Naive thymus-derived CD4-positive, alpha-beta T cell (primary cell): ENCODE measurements at regions of chr1 and their contacts with region 1.

Region 1: GRCh38 chr1:100037927-100038659 is 68.3 kb downstream of the SLC35A3 start:
- DNase-seq: peak; percentile 83 to 92 (median 88)
- ATAC-seq: peak; percentile 91
- H3K4me3 ChIP-seq: peak overlapping the region; percentile 70
- H3K4me3 Mint-ChIP-seq: peak overlapping the region; percentile 93 to 99 (median 97)
- H3K27ac ChIP-seq: peak overlapping the region; percentile 99
- H3K27ac Mint-ChIP-seq: peak overlapping the region; percentile 97 to 100 (median 99)
- H3K4me1 ChIP-seq: peaks cover 22 to 31% of the 10 kb centered on the region in 2 donors
- H3K4me1 Mint-ChIP-seq: peaks cover 29 to 68% (median 58%) of the 10 kb centered on the region in 7 donors
- H3K27me3 ChIP-seq: no peaks in the 10 kb centered on the region
- H3K27me3 Mint-ChIP-seq: no peaks in the 10 kb centered on the region

Region 2: GRCh38 chr1:99808391-99809115 is 229.5 kb before region 1 on chr1:
- CTCF ChIA-PET with region 1: interaction called, 4 read pairs
- POLR2A ChIA-PET with region 1: no interaction called
- intact Hi-C with region 1: loop called (anchors 1 kb)
- DNase-seq: peak in 7 of 9 donors; percentile 32 to 63 (median 55)
- ATAC-seq: peak; percentile 81
- H3K4me3 ChIP-seq: no peak overlapping the region
- H3K4me3 Mint-ChIP-seq: peak overlapping the region in 1 of 10 donors; percentile 16
- H3K27ac ChIP-seq: no peak overlapping the region
- H3K27ac Mint-ChIP-seq: no peak overlapping the region
- H3K4me1 ChIP-seq: no peaks in the 10 kb centered on the region
- H3K4me1 Mint-ChIP-seq: peaks cover 0 to 11% (median 4%) of the 10 kb centered on the region in 7 donors
- H3K27me3 ChIP-seq: no peaks in the 10 kb centered on the region
- H3K27me3 Mint-ChIP-seq: peaks cover 6 to 21% (median 8%) of the 10 kb centered on the region in 5 donors

Region 3: DNA sequence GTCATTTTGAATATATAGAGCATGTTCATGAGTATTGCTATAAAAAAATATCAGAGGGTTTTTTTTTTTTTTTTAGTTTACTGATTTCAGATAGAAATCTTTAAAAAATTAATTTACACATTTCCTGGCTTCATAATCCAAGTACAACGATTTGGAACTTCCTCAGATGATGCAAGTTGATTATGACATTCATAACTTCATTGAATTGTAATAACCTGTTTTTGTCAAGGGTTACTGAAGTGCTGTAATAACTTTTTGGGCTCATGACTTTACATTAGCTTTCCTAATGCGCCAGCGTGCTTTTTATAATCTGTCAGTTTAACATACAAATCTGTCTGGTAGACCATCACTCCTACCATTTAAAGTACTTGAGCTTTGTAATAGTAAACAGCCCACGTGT is 13.3 kb after region 1 on chr1:
- CTCF ChIA-PET with region 1: no interaction called
- POLR2A ChIA-PET with region 1: interaction called, 5 read pairs
- intact Hi-C with region 1: loop called (anchors 1 kb)
- DNase-seq: no peak
- ATAC-seq: no peak
- H3K4me3 ChIP-seq: no peak overlapping the region
- H3K4me3 Mint-ChIP-seq: peak overlapping the region in 1 of 10 donors; percentile 20
- H3K27ac ChIP-seq: no peak overlapping the region
- H3K27ac Mint-ChIP-seq: peak overlapping the region in 1 of 9 donors; percentile 58
- H3K4me1 ChIP-seq: peaks cover 7 to 32% of the 10 kb centered on the region in 2 donors
- H3K4me1 Mint-ChIP-seq: peaks cover 25 to 72% (median 65%) of the 10 kb centered on the region in 7 donors
- H3K27me3 ChIP-seq: no peaks in the 10 kb centered on the region
- H3K27me3 Mint-ChIP-seq: no peaks in the 10 kb centered on the region

Region 4: GRCh38 chr1:100265931-100266740 is 228.0 kb after region 1 on chr1 and contains the start of gene RTCA:
- CTCF ChIA-PET with region 1: no interaction called
- POLR2A ChIA-PET with region 1: no interaction called
- intact Hi-C with region 1: loop called (anchors 1 to 2 kb)
- DNase-seq: peak; percentile 91 to 95 (median 94)
- ATAC-seq: peak; percentile 98
- H3K4me3 ChIP-seq: peak within 1 kb of the TSS; percentile 88
- H3K4me3 Mint-ChIP-seq: peak within 1 kb of the TSS; percentile 97 to 100 (median 100)
- H3K27ac ChIP-seq: peak within 1 kb of the TSS; percentile 88
- H3K27ac Mint-ChIP-seq: peak within 1 kb of the TSS; percentile 94 to 99 (median 97)
- H3K4me1 ChIP-seq: peaks cover 25 to 26% of the 10 kb centered on the region in 2 donors
- H3K4me1 Mint-ChIP-seq: peaks cover 23 to 58% (median 51%) of the 10 kb centered on the region in 7 donors
- H3K27me3 ChIP-seq: no peaks in the 10 kb centered on the region
- H3K27me3 Mint-ChIP-seq: peaks cover 0 to 3% (median 0%) of the 10 kb centered on the region in 5 donors
- total RNA-seq, gene RTCA: 33.3 to 47.7 (median 35.8) TPM

Region 5: GRCh38 chr1:100459358-100460114 is 421.4 kb after region 1 on chr1:
- CTCF ChIA-PET with region 1: no interaction called
- POLR2A ChIA-PET with region 1: no interaction called
- intact Hi-C with region 1: loop called in 1 of 2 experiments (anchors 1 kb)
- DNase-seq: peak; percentile 34 to 62 (median 53)
- ATAC-seq: peak; percentile 87
- H3K4me3 ChIP-seq: no peak overlapping the region
- H3K4me3 Mint-ChIP-seq: peak overlapping the region in 8 of 10 donors; percentile 15 to 65 (median 40)
- H3K27ac ChIP-seq: no peak overlapping the region
- H3K27ac Mint-ChIP-seq: peak overlapping the region; percentile 11 to 93 (median 74)
- H3K4me1 ChIP-seq: peaks cover 18 to 22% of the 10 kb centered on the region in 2 donors
- H3K4me1 Mint-ChIP-seq: peaks cover 21 to 81% (median 59%) of the 10 kb centered on the region in 7 donors
- H3K27me3 ChIP-seq: no peaks in the 10 kb centered on the region
- H3K27me3 Mint-ChIP-seq: no peaks in the 10 kb centered on the region

Region 6: GRCh38 chr1:100895540-100896483 is 857.7 kb after region 1 on chr1 and contains the start of gene SLC30A7:
- CTCF ChIA-PET with region 1: no interaction called
- POLR2A ChIA-PET with region 1: interaction called, 3 read pairs
- intact Hi-C with region 1: loop called (anchors 1 to 2 kb)
- DNase-seq: peak; percentile 93 to 99 (median 94)
- ATAC-seq: peak; percentile 90
- H3K4me3 ChIP-seq: peak within 1 kb of the TSS; percentile 96
- H3K4me3 Mint-ChIP-seq: peak within 1 kb of the TSS; percentile 91 to 100 (median 99)
- H3K27ac ChIP-seq: peak within 1 kb of the TSS; percentile 95
- H3K27ac Mint-ChIP-seq: peak within 1 kb of the TSS; percentile 95 to 100 (median 99)
- H3K4me1 ChIP-seq: peaks cover 7 to 10% of the 10 kb centered on the region in 2 donors
- H3K4me1 Mint-ChIP-seq: peaks cover 17 to 58% (median 50%) of the 10 kb centered on the region in 7 donors
- H3K27me3 ChIP-seq: no peaks in the 10 kb centered on the region
- H3K27me3 Mint-ChIP-seq: no peaks in the 10 kb centered on the region
- total RNA-seq, gene SLC30A7: 29.9 to 44.5 (median 38.8) TPM